Posterior vena cava (tissue), 2 donors: ENCODE measurements at regions of chr1 and their contacts with region 1.

Region 1: GRCh38 chr1:209404577-209404976 is 178.9 kb upstream of the CAMK1G start:
- DNase-seq: no peak

Region 2: DNA sequence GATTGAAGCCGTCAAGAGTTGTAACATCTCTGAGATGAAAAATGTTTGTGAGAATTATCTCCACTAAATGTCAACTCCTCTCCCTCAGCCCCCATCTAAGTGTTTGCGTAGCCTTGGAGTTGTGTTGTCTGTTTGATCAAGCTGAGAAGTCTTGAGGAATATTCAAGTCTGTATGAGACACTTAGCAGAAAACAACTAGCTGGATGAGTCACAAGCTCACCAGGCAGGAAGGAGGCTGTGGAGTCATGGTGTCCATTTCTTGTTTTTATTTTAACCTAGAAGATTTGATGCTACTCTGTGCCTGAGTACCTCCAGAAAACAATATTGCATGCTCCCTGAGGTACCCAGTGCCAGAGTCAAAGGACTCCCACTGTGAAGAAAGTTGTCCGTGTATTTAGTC is 948.8 kb before region 1 on chr1:
- intact Hi-C with region 1: no loop called
- DNase-seq: no peak

Region 3: GRCh38 chr1:209527993-209528392 is 123.4 kb after region 1 on chr1:
- intact Hi-C with region 1: no loop called
- DNase-seq: no peak

Region 4: DNA sequence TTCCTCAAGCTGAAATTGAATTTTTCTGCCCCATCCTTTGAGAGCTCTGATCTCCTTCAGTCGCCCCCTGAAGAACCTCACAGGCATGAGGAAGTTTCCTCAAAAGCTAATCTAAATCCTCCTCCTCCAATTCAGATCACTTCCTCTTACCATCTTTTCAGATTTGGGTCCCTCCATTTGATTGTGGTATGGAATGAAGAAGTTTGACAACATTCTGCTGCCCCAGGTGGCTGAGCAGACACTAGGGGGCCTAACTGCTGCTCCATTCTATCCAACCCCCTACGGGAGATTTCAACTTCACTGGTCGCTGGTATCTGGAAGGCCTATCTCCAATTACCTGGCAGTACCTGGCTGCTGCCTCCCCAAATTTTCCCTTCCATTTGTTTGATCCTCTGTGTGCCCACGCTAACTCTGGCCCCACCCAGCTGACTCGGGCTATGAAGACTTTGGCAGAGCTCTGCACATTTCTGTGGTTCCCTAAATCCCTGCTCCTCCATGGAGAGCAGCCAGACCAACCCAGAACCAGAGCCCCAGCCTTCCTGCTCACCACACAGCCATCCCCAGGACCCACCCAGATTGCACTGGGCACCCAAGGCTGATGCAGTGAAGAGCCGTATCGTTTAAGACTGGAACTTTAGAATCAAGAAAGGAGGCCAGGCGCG is 393.5 kb after region 1 on chr1:
- intact Hi-C with region 1: no loop called
- DNase-seq: no peak

Region 5: DNA sequence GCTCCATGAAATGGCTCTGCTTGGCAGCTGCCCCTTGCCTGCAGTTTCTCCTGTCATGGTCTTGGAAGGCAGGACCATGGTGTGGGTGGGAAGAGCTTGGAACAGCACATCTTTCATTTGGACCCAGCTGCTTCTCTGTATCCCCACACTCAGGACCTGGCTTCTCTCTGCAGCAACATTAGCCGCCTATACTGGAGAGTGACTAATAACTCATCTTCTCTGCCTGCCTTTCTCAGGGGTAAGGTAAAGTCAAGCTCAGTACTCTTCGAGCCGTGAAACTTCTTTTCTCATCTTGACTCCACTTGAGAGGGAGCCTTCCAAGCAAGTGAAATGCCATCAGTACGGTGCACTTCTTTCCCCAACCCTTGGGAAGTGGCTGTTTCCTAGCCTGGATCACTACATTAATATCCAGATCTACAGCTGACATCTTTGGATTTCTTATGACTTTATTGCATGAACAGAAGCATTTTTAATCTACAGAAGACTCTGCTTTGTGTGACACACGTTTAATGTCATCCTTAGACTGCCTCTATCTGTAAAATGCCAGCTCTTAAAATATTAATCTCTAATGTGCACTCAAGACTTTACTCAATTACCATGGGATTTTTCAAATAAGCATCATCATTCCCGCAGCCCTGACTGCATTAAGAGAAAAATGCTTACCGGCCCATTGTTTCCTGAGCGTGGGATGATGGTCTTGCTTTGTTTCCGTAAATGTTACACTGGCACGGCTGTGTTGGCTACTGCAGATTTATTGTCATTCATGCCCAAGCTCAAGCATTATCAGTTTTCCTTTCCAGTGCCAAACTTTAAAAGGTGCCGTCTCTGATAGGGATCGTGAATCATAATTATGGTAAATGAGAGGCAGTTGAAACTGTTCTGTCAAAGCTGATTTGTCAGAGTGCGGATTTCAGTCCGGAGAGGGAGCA is 1167.0 kb after region 1 on chr1:
- intact Hi-C with region 1: loop called in 1 of 2 experiments (anchors 5 kb)
- DNase-seq: no peak